Endothelial cell of umbilical vein (primary cell): ENCODE measurements at regions of chr3 and their contacts with region 1.

Region 1: GRCh38 chr3:128322066-128323022 is 144.3 kb downstream of the DNAJB8 start:
- DNase-seq: peak; percentile 42
- H3K4me3 ChIP-seq: no peak overlapping the region
- H3K27ac ChIP-seq: no peak overlapping the region
- H3K4me1 ChIP-seq: no peaks in the 10 kb centered on the region
- H3K27me3 ChIP-seq: no peaks in the 10 kb centered on the region
- CTCF ChIP-seq: peak; percentile 59 to 75
- POLR2A ChIP-seq: no peak

Region 2: DNA sequence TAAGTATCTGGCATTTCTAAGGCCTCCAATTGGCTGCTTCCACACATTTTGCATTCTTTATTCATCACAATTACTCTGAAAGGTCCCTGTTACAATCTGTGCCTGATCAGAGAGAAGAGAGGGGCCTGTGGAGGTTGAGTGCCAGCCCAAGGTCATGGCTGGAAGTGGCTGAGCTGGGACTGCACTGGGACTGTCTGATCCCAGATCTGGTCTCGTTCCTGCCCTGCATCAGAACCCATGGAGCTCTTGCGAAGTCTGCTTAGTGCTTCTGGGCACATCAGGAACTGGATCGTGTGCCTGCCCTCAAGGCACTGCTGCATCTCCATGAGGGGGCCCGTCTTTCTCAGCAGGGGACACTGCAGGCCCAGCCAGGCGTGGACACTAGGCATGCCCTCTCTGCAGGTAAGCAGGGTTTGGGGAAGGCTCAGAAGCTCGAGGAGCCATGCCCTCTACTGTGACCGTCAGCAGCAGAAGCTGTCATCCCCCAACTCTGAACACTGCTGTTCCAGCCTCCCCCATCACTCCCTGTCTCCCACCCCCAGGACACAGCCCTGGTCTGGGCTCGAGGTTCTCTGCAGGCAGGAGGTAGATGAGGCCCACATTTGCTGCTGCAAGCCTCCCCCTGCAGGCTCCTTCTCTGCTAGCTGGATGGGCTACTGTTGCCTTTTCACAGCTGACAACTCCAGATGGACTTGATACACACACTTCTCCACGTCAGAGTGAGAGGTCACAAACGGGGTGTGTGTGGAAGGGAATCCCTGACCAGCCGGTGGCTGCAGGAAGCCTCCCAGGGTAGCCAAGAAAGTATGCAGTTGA is 1225.9 kb before region 1 on chr3:
- CTCF ChIA-PET with region 1: no interaction called
- POLR2A ChIA-PET with region 1: no interaction called
- dilution Hi-C with region 1: no loop called
- intact Hi-C with region 1: no loop called
- DNase-seq: no peak
- H3K4me3 ChIP-seq: no peak overlapping the region
- H3K27ac ChIP-seq: no peak overlapping the region
- H3K4me1 ChIP-seq: no peaks in the 10 kb centered on the region
- H3K27me3 ChIP-seq: no peaks in the 10 kb centered on the region
- CTCF ChIP-seq: no peak
- POLR2A ChIP-seq: no peak

Region 3: DNA sequence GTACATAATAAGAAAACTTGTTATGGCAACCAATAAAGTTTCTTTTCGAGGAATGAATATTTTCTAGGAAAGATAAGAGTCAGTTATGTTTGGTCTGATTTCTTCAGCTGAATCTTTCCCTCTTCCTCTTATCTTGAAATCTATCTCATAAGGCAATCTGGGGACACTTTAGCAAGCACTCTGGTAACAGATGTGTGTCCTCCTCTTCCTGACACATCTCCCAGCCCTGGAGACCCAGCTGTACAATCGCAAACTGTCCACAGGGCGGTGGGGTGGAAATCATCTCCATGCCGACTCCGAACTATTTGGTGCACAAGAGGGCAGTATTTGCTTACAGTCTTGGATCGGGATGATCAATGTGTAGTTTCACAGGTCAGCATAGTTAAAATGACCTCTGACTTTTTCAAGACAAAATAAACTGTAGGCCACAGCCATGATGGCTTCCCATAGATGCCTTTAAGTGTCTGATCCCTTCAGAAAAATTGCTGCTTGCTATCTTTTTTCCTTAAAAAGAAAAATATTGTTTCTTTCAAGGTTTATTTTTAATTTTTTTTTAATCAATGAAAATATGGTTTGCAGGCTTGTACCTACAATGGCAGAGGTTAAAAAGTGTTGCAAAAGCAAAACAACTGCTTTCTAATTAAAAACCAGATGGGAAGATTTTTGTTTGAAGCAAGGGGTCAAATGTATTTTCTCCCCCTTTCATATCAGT is 151.4 kb before region 1 on chr3:
- CTCF ChIA-PET with region 1: interaction called, 17 read pairs
- POLR2A ChIA-PET with region 1: no interaction called
- dilution Hi-C with region 1: no loop called
- intact Hi-C with region 1: loop called (anchors 1 kb)
- DNase-seq: peak; percentile 78
- H3K4me3 ChIP-seq: no peak overlapping the region
- H3K27ac ChIP-seq: no peak overlapping the region
- H3K4me1 ChIP-seq: no peaks in the 10 kb centered on the region
- H3K27me3 ChIP-seq: no peaks in the 10 kb centered on the region
- CTCF ChIP-seq: peak; percentile 73 to 83
- POLR2A ChIP-seq: no peak

Region 4: GRCh38 chr3:128226795-128227395 is 95.4 kb before region 1 on chr3:
- CTCF ChIA-PET with region 1: interaction called, 76 read pairs
- POLR2A ChIA-PET with region 1: no interaction called
- dilution Hi-C with region 1: no loop called
- intact Hi-C with region 1: loop called (anchors 1 kb)
- DNase-seq: peak; percentile 59
- H3K4me3 ChIP-seq: no peak overlapping the region
- H3K27ac ChIP-seq: no peak overlapping the region
- H3K4me1 ChIP-seq: no peaks in the 10 kb centered on the region
- H3K27me3 ChIP-seq: no peaks in the 10 kb centered on the region
- CTCF ChIP-seq: peak; percentile 89 to 98
- POLR2A ChIP-seq: no peak

Region 5: DNA sequence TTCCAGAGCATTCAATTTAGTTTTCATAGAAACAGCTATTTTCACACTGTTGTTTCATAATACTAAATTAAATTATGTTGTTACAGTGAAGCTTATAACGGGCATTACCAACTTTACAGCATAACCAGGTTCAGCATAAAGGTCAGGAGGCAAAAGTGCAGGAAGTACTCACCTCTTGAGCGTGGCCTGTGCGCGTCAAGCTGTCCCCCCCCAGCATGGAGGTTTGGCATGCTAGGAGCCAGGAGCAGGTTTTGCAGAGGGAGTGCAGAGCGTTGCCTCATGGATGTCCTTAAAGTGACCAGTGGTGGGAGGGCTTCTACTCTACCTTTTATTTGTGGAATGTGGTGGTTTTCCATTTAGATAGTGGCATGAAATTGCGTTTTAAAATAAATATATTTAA is 64.7 kb before region 1 on chr3:
- CTCF ChIA-PET with region 1: interaction called, 10 read pairs
- POLR2A ChIA-PET with region 1: no interaction called
- dilution Hi-C with region 1: no loop called
- intact Hi-C with region 1: no loop called
- DNase-seq: no peak
- H3K4me3 ChIP-seq: no peak overlapping the region
- H3K27ac ChIP-seq: no peak overlapping the region
- H3K4me1 ChIP-seq: no peaks in the 10 kb centered on the region
- H3K27me3 ChIP-seq: no peaks in the 10 kb centered on the region
- CTCF ChIP-seq: no peak
- POLR2A ChIP-seq: no peak

Region 6: DNA sequence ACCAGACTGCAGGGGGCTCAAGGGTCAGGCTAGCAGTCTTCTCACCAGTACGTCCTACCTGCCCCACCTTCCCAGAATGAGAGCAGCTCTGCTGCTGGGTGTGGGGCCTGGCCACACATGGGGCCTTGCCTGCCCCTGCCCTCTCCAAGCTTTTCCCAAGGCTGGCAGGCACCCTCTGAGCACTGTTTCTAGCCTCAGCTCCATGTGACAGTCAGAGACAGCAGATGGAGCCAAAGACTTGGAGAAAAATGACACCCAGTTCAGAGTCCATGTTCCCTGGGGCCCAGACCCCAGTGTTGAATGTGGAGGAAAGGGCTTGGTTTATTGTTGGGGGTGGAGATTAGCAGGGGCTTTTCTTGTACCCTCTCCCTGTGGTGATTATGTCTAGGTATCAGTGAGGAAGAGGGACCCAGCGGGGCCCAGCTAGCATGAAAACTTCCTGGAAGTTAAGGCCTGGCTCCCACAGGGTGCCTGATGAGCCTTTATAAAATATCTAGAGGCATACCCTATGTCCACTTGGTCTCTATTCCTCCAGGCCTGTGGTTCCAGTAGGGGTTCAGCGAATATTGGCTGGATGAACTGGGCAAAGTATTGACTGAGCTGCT is 15.2 kb before region 1 on chr3:
- CTCF ChIA-PET with region 1: interaction called, 11 read pairs
- POLR2A ChIA-PET with region 1: no interaction called
- dilution Hi-C with region 1: no loop called
- intact Hi-C with region 1: no loop called
- DNase-seq: peak; percentile 16
- H3K4me3 ChIP-seq: no peak overlapping the region
- H3K27ac ChIP-seq: no peak overlapping the region
- H3K4me1 ChIP-seq: no peaks in the 10 kb centered on the region
- H3K27me3 ChIP-seq: no peaks in the 10 kb centered on the region
- CTCF ChIP-seq: peak in 1 of 2 donors; percentile 10
- POLR2A ChIP-seq: no peak

Region 7: DNA sequence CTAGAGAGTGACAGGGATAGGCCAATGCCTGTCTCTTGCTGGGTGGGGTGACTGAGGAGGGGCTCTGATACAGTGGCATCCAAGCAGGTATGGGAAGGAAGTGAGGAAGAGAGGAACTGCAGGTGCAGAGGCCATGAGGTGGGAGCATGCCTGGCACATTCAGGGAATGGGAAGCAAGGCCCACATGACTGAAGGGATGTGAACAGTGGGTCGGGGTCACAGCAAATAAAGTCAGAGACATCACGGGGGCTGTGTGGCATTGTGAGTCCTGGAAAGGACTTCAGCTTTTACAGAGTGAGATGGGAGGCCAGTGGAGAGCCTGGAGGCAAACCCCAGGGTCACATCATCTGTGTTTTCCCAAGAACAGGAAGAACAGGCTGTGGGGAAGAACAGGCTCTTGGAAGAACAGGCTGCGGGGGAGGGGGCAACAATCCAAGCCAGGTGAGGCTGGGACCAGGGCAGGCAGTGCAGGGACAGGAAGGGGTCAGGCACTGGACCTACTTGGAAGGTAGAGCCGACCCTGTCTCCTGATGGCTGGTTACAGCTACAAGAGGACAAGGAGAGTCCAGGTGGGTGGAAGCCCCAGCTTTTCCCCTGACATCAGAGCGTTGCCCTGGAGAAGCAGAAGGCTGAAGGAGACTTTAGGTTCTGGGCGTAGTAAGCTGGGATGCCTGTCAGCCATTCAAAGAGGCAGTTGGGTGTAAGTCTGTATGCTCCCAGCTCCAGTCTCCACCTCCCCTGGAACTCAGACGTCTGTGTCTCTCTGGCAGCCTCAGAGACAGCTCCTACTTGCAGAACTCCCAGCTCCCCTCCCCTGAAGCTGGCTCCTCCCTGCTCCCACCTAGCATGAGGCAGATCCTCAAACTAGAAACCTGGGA is 13.2 kb after region 1 on chr3:
- CTCF ChIA-PET with region 1: interaction called, 32 read pairs
- POLR2A ChIA-PET with region 1: no interaction called
- dilution Hi-C with region 1: no loop called
- intact Hi-C with region 1: no loop called
- DNase-seq: no peak
- H3K4me3 ChIP-seq: no peak overlapping the region
- H3K27ac ChIP-seq: no peak overlapping the region
- H3K4me1 ChIP-seq: no peaks in the 10 kb centered on the region
- H3K27me3 ChIP-seq: no peaks in the 10 kb centered on the region
- CTCF ChIP-seq: no peak
- POLR2A ChIP-seq: no peak

Region 8: DNA sequence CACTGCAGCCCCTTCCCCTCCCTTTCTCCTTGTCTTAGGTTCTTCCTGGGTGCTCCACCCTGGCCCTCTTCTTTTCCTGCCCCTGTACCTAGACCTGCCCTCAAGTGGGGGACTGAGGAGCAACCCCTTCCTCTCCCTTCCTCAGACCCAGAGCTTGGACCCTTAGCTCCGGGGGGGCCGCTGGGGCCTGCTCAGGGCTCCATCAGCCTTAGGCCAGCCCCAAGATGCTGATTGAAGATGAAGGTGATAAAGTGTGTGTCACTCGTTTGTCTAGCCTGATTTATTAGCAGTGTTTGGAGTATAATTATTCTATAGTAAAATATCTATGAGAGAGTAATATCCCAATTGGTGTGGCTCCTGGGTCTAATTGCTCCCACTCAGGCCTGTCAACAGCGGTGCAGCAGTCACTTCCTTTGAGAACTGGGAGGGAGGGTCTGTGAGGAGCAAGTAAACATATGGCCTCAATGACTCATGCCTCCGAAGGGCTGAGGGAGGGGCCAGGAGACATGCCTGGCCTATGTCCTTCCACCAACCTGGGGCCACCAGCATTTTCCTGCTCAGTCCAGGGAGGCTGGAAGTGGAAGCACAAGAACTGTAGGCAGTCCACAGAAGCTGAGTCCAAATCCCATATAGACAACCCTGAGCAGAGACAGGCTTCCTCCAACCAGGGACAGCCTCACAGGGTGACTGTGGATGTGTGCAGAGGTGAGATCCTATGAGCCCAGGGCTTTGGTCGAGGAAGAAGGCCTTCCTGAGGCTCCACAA is 21.1 kb after region 1 on chr3:
- CTCF ChIA-PET with region 1: interaction called, 10 read pairs
- POLR2A ChIA-PET with region 1: no interaction called
- dilution Hi-C with region 1: no loop called
- intact Hi-C with region 1: no loop called
- DNase-seq: peak; percentile 88
- H3K4me3 ChIP-seq: no peak overlapping the region
- H3K27ac ChIP-seq: peak overlapping the region; percentile 16
- H3K4me1 ChIP-seq: peaks cover 11% of the 10 kb centered on the region
- H3K27me3 ChIP-seq: no peaks in the 10 kb centered on the region
- CTCF ChIP-seq: no peak
- POLR2A ChIP-seq: no peak